Head of caudate nucleus (tissue), 42 donors: ENCODE measurements at regions of chr12 and their contacts with region 1.

Region 1: DNA sequence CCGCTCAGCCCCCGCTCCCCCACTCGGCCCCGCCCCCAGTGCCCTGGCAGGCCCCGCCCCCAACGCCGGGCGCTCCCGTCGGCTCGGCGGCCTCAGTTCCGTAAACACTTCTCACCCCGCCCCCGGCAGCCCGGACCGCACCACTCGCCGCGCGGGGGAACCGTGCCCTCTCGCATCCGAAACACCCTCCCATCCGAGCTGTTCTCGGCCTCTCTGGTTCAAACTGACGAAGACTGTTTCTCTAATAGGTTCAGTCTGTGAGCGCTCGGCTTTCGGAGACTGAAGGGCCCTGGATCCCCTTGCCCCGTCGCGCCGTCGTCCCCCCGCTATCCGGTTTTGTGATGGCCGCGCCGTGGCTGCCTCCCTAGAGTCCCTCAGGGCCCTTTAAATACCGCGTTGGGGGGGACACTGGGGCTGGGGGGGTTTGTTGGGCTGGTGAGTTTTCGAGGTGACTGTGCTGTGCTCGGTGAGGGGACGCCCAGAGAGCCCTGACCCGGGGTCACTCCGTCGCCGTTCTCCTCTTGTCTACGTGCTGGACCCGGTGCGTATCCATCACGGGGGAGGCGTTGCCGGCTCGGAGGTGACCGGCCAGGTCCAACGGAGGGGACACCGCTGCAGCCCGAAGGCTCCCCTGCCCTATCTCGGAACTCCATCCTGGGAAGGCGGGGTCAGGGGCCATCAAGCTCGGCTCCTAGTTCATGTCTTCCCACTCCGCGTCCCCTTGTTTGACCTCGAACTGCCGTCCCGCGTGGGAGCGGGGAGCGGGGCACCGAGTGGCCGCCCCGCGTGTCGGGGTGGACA is at the start of gene TCP11L2:
- DNase-seq: peak; percentile 80 to 96 (median 91)

Region 2: DNA sequence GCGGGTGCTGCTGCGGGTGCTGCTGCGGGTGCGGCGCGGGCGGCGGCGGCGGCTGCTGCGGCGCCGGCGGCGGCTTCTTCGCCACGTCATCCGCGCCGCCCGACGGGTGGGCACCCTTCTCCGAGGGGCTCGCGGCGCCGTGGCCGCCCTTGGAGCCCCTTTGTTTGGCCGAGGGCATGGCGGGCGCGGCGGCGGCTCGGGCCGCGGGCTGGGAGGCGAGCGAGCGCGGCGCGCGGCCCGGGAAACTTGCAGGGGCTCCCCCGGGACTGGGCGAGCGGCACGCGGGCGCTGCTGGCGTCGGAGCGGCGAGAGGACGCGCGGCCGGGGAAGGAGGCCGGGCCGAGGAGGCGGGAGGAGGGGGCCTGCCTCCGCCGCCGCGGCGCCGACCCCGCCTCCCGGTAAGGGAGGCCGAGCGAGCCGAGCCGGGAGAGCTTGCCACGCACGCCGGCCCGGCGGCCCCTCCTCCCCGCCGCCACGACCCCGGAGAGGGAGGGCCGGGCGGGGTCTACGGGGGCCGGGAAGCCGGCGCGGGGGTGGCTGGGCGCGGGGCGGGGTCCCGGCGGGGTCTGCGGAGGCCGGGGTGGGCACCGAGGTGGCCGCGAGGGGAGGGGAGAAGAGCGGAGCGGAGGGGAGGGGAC is 54.8 kb before region 1 on chr12 and contains the start of gene CKAP4:
- intact Hi-C with region 1: loop called (anchors 5 kb)
- DNase-seq: peak in 38 of 42 donors; percentile 22 to 78 (median 54)

Region 3: DNA sequence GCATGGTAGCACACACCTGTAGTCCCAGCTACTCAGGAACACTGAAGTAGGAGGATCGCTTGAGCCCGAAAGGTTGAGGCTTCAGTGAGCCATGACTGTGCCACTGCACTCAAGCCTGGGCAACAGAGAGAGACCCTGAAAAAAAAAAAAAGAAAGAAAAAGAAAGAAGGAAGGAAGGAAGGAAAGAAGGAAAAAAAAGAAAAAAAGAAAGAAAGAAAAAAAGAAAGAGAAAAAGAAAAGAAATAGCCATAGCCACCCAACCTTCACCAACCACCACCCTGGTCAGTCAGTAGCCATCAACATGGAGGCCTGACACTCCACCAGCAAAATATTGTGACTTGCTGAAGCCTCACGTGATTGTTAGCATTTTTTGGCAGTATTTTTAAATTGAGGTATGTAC is 631.7 kb after region 1 on chr12:
- intact Hi-C with region 1: no loop called
- DNase-seq: no peak